ENCODE measurements at regions of chr16 and their contacts with region 1.

Region 1: GRCh38 chr16:14300705-14301168 is 229.6 kb downstream of the MRTFB start:
- DNase-seq: no peak
- H3K4me3 Mint-ChIP-seq: peak overlapping the region; percentile 79
- H3K27ac Mint-ChIP-seq: no peak overlapping the region
- H3K4me1 Mint-ChIP-seq: peaks cover 8% of the 10 kb centered on the region
- H3K27me3 Mint-ChIP-seq: peaks cover 38% of the 10 kb centered on the region

Region 2: DNA sequence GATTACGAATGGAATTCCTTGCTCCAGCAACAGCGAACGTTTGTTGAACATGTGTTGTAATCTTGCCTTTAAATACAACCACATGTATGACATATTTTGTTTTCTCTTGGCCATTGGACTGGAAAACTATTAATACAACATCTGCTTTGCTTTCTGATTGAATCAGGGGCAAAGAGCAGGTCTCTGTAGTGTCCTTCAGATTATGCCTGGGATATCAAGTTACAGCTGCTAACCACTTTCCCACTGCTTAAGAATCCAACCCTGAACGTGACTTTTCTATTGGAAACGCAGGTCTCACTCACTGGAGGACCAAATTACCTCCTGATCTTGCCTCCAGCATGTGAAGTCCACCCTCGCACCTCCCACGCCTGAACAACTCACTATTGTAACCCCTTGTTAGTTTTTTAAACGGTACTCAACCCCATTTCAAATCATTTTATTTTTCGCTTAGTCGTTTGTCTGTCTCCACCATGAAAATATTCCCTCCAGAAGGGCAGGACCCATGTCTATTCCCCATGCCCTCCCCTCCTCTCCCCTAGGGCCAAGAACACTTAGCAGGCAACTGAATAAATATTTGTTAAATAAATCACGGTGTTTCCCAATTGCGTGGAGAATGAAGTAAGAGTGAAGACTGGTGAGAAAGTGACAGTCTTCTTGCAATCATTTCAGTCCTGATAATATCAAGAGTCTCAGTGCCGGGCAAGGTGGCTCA is 287.0 kb before region 1 on chr16:
- intact Hi-C with region 1: no loop called
- DNase-seq: no peak
- H3K4me3 Mint-ChIP-seq: no peak overlapping the region
- H3K27ac Mint-ChIP-seq: no peak overlapping the region
- H3K4me1 Mint-ChIP-seq: peaks cover 5% of the 10 kb centered on the region
- H3K27me3 Mint-ChIP-seq: peaks cover 18% of the 10 kb centered on the region

Region 3: DNA sequence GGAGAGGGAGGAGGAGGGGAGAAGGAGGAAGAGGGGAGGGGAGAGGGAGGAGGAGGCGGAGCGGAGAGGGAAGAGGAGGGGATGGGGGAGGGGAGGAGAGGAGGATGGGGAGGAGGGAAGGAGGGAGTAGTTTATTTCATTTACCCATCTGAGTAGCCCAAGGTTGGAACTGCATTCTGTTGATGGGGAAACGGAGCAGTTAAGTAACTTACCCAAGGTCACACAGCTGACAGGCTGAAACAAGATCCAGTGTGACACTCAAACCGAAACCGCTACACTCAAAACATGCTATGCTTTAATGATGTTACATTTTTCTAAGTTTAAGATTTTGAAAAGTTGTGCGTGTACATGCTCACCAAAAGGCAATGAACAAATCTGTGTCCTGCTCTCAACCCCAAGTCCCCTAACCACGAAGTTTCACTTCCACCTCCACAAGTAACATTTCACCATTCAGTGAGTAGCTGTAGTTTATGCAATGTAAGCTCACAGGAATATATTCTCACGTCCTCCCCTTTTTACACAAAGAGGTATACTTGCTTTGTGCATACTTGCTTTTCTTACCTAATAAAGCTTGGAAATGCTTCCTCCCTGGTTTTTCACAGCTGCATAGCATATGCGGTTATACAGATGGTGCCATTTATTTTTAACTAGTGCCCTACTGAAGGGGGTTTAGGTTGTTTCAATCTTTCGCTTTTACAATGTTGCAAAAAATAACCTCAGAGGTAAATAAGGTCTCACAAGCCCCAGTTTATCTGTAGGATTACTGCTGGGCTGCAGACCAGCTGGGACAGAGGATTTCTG is 54.0 kb after region 1 on chr16:
- intact Hi-C with region 1: loop called (anchors 1 kb)
- DNase-seq: peak; percentile 25
- H3K4me3 Mint-ChIP-seq: no peak overlapping the region
- H3K27ac Mint-ChIP-seq: no peak overlapping the region
- H3K4me1 Mint-ChIP-seq: peaks cover 7% of the 10 kb centered on the region
- H3K27me3 Mint-ChIP-seq: peaks cover 16% of the 10 kb centered on the region

Measured in activated T-helper 2 cell treated with anti-CD3 and anti-CD28 coated beads, Interferon-gamma antibody, Interleukin-2, Interleukin-4, amounts not matched to agents 10 μg/mL and 5 μg/mL and 100 μg/mL, durations not matched to agents 14 hours and 24 hours and 36 hours (primary cell).